ENCODE measurements at regions of chr10 and their contacts with region 1.

Region 1: DNA sequence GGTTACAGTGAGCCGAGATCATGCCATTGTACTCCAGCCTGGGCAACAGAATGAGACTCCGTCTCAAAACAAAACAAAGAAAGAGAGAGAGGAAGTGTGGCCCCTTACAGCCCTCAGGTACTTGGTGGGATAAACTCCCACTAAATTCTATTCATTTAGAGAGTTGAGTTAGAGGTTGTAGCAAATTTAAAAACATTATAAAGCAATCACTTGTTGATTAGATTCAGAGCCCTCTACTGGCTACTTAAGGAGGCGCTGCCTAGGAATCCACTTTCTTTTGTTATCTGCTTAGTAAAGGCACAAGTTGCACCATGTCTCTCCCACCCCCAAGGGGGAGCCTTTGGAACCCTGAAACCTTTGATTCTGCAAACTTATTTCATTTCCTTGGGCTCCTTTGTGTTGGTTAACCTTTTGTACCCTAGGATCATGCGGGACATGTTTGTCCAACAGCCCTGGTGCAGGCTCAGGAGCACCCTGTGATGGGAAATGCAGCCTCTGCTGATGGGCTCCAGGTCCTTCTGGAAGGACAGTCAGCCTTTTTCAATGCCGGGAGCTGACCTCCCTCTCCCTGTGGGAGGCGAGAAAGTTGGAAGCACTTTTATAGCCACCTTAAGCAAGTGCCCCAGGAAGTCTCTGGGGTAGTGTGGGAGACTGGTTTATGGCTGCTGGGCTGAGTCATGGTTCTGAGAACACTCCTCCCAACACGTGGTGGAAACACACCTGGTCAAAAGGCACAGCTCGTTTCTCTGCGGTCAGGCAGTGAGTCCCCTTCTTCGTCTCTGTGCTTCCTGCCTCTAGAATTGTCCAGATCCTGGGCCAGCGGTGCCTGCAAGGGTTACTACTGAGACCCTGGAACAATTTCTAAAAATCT is 2.3 kb downstream of the HKDC1 start:
- DNase-seq: peak; percentile 89 to 96
- H3K4me3 ChIP-seq: no peak overlapping the region
- H3K4me3 Mint-ChIP-seq: peak overlapping the region; percentile 68
- H3K27ac Mint-ChIP-seq: peak overlapping the region; percentile 86
- H3K4me1 ChIP-seq: peaks cover 60% of the 10 kb centered on the region
- H3K4me1 Mint-ChIP-seq: peaks cover 24% of the 10 kb centered on the region
- H3K27me3 ChIP-seq: no peaks in the 10 kb centered on the region
- H3K27me3 Mint-ChIP-seq: no peaks in the 10 kb centered on the region
- CTCF ChIP-seq: peak; percentile 84 to 89

Region 2: DNA sequence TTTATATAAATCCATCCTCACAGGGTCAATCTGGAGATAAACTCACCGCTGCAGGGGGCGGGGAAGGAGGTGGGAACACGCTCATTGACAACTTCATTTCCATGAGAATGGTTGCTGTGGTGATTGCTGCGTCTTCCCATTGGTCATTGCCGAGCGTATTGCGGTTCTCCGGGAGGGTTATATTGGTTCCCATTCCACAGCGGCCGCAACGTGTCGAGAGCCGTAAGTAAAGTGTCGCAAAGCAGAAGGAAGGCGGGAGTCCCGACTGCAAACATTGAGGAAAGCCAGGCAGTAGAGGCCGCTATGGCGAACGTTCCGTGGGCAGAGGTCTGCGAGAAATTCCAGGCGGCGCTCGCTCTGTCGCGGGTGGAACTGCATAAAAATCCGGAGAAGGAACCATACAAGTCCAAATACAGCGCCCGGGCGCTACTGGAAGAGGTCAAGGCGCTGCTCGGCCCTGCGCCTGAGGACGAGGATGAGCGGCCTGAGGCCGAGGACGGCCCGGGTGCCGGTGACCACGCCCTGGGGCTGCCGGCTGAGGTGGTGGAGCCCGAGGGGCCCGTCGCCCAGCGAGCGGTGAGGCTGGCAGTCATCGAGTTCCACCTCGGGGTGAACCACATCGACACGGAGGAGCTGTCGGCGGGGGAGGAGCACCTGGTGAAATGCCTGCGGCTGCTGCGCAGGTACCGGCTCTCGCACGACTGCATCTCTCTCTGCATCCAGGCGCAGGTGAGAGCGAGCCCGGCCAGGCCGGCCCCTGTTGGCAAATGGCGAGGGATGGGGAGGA is 233.7 kb before region 1 on chr10 and contains the start of gene KIFBP:
- CTCF ChIA-PET with region 1: no interaction called
- POLR2A ChIA-PET with region 1: no interaction called
- intact Hi-C with region 1: loop called (anchors 1 kb)
- DNase-seq: peak; percentile 99
- H3K4me3 ChIP-seq: peak within 1 kb of the TSS; percentile 76
- H3K4me3 Mint-ChIP-seq: peak within 1 kb of the TSS; percentile 81
- H3K27ac Mint-ChIP-seq: peak within 1 kb of the TSS; percentile 90
- H3K4me1 ChIP-seq: peaks cover 7% of the 10 kb centered on the region; the same call in 1 of the 2 replicates
- H3K4me1 Mint-ChIP-seq: peaks cover 41% of the 10 kb centered on the region
- H3K27me3 ChIP-seq: no peaks in the 10 kb centered on the region
- H3K27me3 Mint-ChIP-seq: no peaks in the 10 kb centered on the region
- CTCF ChIP-seq: peak; percentile 67 to 86
- total RNA-seq, gene KIFBP: 57.6 and 58.9 TPM in 2 replicates

Region 3: DNA sequence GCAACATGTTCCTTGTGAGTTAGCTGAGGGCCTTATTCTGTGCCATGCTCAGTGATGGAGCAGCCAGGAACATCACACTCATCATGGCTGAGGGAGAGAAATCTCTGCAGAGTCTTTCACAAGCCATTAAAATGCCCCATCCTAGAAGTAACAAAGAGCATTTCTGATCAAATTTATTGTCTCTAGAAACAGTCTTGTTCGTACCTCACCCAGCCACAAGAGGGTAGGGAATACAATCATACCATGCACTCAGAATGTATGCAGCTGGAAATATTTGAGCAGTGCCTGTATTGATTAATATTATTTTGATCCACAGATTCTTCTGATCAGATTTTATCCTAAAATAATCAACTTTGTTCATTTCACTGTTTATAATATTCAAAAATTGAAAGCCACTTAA is 81.1 kb before region 1 on chr10:
- CTCF ChIA-PET with region 1: no interaction called
- POLR2A ChIA-PET with region 1: interaction called, 10 read pairs
- intact Hi-C with region 1: no loop called
- DNase-seq: no peak
- H3K4me3 ChIP-seq: no peak overlapping the region
- H3K4me3 Mint-ChIP-seq: no peak overlapping the region
- H3K27ac Mint-ChIP-seq: no peak overlapping the region
- H3K4me1 ChIP-seq: no peaks in the 10 kb centered on the region
- H3K4me1 Mint-ChIP-seq: no peaks in the 10 kb centered on the region
- H3K27me3 ChIP-seq: no peaks in the 10 kb centered on the region
- H3K27me3 Mint-ChIP-seq: no peaks in the 10 kb centered on the region
- CTCF ChIP-seq: peak in 1 of 2 experiments; percentile 32

Region 4: GRCh38 chr10:69179743-69180524 is 42.5 kb before region 1 on chr10 and contains the start of gene SUPV3L1:
- CTCF ChIA-PET with region 1: interaction called, 4 read pairs
- POLR2A ChIA-PET with region 1: interaction called, 4 read pairs
- intact Hi-C with region 1: loop called (anchors 1 kb)
- DNase-seq: peak; percentile 97 to 99
- H3K4me3 ChIP-seq: peak within 1 kb of the TSS; percentile 94
- H3K4me3 Mint-ChIP-seq: peak within 1 kb of the TSS; percentile 79
- H3K27ac Mint-ChIP-seq: peak within 1 kb of the TSS; percentile 100
- H3K4me1 ChIP-seq: no peaks in the 10 kb centered on the region
- H3K4me1 Mint-ChIP-seq: peaks cover 15% of the 10 kb centered on the region
- H3K27me3 ChIP-seq: no peaks in the 10 kb centered on the region
- H3K27me3 Mint-ChIP-seq: no peaks in the 10 kb centered on the region
- CTCF ChIP-seq: no peak
- total RNA-seq, gene SUPV3L1: 77.1 and 79.2 TPM in 2 replicates